Head of caudate nucleus (tissue), 42 donors: ENCODE measurements at regions of chr19 and their contacts with region 1.

Region 1: GRCh38 chr19:30227661-30228428 is 144.3 kb upstream of the ZNF536 start:
- DNase-seq: peak in 41 of 42 donors; percentile 67 to 93 (median 84)

Region 2: GRCh38 chr19:30046522-30046921 is 181.3 kb before region 1 on chr19:
- intact Hi-C with region 1: loop called (anchors 5 kb)
- DNase-seq: peak in 13 of 42 donors; percentile 33 to 78 (median 56)

Region 3: GRCh38 chr19:30284209-30284608 is 56.4 kb after region 1 on chr19:
- intact Hi-C with region 1: loop called (anchors 2 kb)
- DNase-seq: no peak

Region 4: GRCh38 chr19:30374865-30375552 is 147.2 kb after region 1 on chr19:
- intact Hi-C with region 1: loop called (anchors 5 kb)
- DNase-seq: peak in 38 of 42 donors; percentile 28 to 81 (median 60)

Region 5: GRCh38 chr19:30406220-30407067 is 178.6 kb after region 1 on chr19:
- intact Hi-C with region 1: loop called (anchors 10 kb)
- DNase-seq: peak in 41 of 42 donors; percentile 37 to 90 (median 72)